Activated naive CD4-positive, alpha-beta T cell treated with anti-CD3 and anti-CD28 coated beads for 36 hours (primary cell): ENCODE measurements at regions of chr4 and their contacts with region 1.

Region 1: DNA sequence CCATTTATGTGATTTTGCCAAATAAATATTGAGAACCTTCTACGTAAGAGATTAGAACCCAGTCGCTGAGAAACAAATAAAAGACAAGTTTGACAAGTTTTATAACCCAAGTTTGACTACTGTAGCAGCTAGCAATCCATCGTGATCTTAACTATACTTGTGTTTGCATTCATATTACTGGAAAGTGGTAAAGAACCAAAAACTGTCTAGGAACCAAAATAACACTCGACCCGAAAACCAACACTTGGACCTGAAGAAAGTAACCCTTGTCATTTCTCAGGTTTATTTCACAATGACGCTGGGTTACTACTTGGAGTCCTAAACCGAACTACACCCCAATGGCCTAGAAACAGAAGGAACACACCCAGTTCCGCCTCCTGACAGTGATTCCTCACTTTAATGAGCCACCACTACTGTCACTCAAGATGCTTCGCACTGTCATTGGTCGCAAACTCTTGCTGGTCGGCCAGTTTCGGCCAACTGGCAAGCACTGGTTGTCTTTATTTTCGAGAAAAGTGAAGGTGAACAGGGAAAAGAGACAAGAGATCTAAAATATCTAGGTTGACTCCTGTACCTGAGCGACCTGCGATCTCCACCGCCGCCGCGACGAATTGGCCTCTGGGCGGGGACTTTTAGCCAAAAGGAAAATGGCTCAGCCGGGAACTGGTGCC is 496 bp downstream of the FBXO8 start:
- DNase-seq: peak; percentile 87
- H3K4me3 Mint-ChIP-seq: peak overlapping the region; percentile 98
- H3K27ac Mint-ChIP-seq: peak overlapping the region; percentile 99
- H3K4me1 Mint-ChIP-seq: peaks cover 55% of the 10 kb centered on the region
- H3K27me3 Mint-ChIP-seq: no peaks in the 10 kb centered on the region

Region 2: GRCh38 chr4:173181769-173182354 is 1101.1 kb before region 1 on chr4:
- CTCF ChIA-PET with region 1: no interaction called
- intact Hi-C with region 1: loop called (anchors 5 kb)
- DNase-seq: no peak
- H3K4me3 Mint-ChIP-seq: no peak overlapping the region
- H3K27ac Mint-ChIP-seq: no peak overlapping the region
- H3K4me1 Mint-ChIP-seq: peaks cover 37% of the 10 kb centered on the region
- H3K27me3 Mint-ChIP-seq: no peaks in the 10 kb centered on the region

Region 3: GRCh38 chr4:173370477-173371291 is 912.3 kb before region 1 on chr4 and contains the start of gene SAP30:
- CTCF ChIA-PET with region 1: no interaction called
- intact Hi-C with region 1: loop called (anchors 1 kb)
- DNase-seq: peak; percentile 98
- H3K4me3 Mint-ChIP-seq: peak within 1 kb of the TSS; percentile 99
- H3K27ac Mint-ChIP-seq: peak within 1 kb of the TSS; percentile 99
- H3K4me1 Mint-ChIP-seq: peaks cover 18% of the 10 kb centered on the region
- H3K27me3 Mint-ChIP-seq: peaks cover 20% of the 10 kb centered on the region
- total RNA-seq, gene SAP30: 9.2 to 9.7 TPM

Region 4: DNA sequence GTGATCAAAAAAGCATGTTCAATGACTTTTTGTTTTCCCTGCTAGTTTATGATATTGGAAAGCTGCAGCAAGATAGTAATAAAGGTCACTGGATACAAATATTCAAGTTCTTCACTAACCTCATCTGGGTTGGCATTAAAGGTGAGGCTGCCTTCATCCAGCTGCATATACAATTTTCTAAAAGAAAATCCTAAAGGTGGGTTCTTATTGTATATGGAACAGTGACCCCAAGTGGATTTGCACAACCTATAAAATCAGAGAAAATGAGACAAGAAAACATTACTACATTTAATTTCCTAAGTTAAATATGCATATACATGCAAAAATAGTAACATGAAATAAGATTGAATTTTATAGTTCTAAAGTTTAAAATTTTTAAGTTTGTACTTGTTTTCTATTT is 23.4 kb before region 1 on chr4:
- CTCF ChIA-PET with region 1: no interaction called
- intact Hi-C with region 1: loop called (anchors 2 kb)
- DNase-seq: no peak
- H3K4me3 Mint-ChIP-seq: no peak overlapping the region
- H3K27ac Mint-ChIP-seq: no peak overlapping the region
- H3K4me1 Mint-ChIP-seq: peaks cover 5% of the 10 kb centered on the region
- H3K27me3 Mint-ChIP-seq: no peaks in the 10 kb centered on the region

Region 5: GRCh38 chr4:174334628-174335027 is 51.7 kb after region 1 on chr4:
- CTCF ChIA-PET with region 1: no interaction called
- intact Hi-C with region 1: no loop called
- DNase-seq: no peak
- H3K4me3 Mint-ChIP-seq: no peak overlapping the region
- H3K27ac Mint-ChIP-seq: no peak overlapping the region
- H3K4me1 Mint-ChIP-seq: no peaks in the 10 kb centered on the region
- H3K27me3 Mint-ChIP-seq: no peaks in the 10 kb centered on the region